AG04449 (cell line): ENCODE measurements at regions of chr19 and their contacts with region 1.

Region 1: DNA sequence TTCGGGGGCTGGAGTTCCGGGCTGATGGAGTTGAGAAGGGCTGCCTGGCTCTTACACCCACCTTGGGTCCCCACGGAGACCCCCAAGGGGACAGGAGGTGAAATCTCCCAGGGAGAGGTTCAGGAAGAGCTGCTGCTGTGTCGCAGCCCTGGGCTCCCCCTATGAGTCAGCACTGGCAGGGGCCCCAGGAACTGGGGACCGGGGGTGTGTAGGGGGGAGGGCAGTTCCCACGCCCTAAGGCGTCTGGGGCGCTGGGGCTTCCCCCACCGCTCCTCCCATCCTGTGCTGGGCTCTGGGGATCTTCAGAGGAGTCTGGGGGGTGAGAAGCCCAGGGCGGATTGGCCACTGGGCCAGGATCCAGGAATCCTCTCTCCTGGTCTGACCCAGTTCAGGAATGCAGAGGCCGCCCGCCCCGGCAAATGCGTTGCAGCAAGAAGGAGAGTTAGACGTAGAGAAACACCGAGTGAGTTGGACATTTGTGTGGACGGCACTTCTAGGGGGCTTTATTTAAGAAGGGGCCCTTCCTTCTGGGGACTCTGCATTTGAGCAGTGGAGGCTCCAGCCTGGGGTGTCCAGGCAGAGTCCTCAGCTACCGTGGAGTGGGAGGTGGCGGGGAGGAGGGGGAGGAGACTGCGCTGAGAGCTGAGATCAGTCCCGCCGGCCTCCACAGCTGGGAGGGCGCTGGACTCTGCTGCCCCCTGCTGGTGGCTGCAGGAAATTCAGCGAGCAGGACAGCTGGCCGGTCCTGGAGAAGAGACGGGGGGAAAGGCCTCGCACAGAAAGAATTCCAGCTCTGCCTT is 15.0 kb upstream of the NANOS3 start:
- DNase-seq: peak; percentile 77
- H3K4me3 ChIP-seq: peak overlapping the region; percentile 55
- CTCF ChIP-seq: peak; percentile 97

Region 2: GRCh38 chr19:13784731-13785452 is 77.0 kb before region 1 on chr19:
- CTCF ChIA-PET with region 1: interaction called, 138 read pairs
- POLR2A ChIA-PET with region 1: interaction called, 7 read pairs
- DNase-seq: no peak
- H3K4me3 ChIP-seq: no peak overlapping the region
- CTCF ChIP-seq: peak; percentile 78

Region 3: GRCh38 chr19:13833330-13834243 is 28.3 kb before region 1 on chr19:
- CTCF ChIA-PET with region 1: interaction called, 61 read pairs
- POLR2A ChIA-PET with region 1: interaction called, 149 read pairs
- DNase-seq: no peak
- H3K4me3 ChIP-seq: no peak overlapping the region; the same call in 1 of the 2 replicates
- CTCF ChIP-seq: peak; percentile 46

Region 4: GRCh38 chr19:13846557-13847406 is 15.2 kb before region 1 on chr19:
- CTCF ChIA-PET with region 1: interaction called, 41 read pairs
- POLR2A ChIA-PET with region 1: interaction called, 149 read pairs
- DNase-seq: no peak
- H3K4me3 ChIP-seq: peak overlapping the region; percentile 60
- CTCF ChIP-seq: no peak

Region 5: GRCh38 chr19:13888240-13888639 is 26.3 kb after region 1 on chr19:
- CTCF ChIA-PET with region 1: no interaction called
- POLR2A ChIA-PET with region 1: no interaction called
- DNase-seq: no peak
- H3K4me3 ChIP-seq: no peak overlapping the region
- CTCF ChIP-seq: no peak